ENCODE measurements at regions of chr2 and their contacts with region 1.

Region 1: DNA sequence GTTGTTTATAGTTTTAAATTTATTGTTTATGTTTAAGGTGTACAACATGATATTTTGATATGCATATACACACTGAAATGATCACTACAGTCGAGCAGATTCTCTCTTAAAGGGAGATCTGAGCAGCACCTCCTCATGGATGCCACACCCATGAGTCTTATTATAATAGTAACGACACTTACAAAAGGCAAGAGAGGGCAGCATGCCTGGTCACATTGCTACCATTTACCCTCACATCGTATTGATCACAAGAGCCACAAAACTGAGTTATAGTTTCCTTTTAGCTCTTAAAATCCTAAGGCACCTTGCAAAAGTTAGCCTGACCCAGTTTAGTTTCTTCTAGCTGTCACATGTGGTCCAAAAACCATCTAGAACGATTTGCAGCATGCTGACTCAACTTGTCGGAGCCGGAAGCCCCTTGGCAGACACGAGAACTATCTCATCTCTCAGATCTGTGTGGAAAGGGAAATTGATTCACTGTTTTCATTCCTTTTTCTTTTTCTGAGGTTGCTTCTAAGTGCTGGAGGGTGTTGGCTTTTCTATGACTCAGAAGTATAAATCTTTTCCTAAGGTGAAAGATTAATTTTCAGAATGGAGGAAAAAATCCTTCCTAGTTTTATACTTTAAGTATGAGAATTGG is 85.3 kb downstream of the CDC42EP3 start:
- DNase-seq: peak; percentile 93
- ATAC-seq: peak; percentile 25
- H3K4me3 ChIP-seq: no peak overlapping the region
- H3K27ac ChIP-seq: no peak overlapping the region
- H3K4me1 ChIP-seq: peaks cover 22% of the 10 kb centered on the region
- H3K27me3 ChIP-seq: no peaks in the 10 kb centered on the region
- CTCF ChIP-seq: no peak
- POLR2A ChIP-seq: no peak
- RAD21 ChIP-seq: no peak

Region 2: DNA sequence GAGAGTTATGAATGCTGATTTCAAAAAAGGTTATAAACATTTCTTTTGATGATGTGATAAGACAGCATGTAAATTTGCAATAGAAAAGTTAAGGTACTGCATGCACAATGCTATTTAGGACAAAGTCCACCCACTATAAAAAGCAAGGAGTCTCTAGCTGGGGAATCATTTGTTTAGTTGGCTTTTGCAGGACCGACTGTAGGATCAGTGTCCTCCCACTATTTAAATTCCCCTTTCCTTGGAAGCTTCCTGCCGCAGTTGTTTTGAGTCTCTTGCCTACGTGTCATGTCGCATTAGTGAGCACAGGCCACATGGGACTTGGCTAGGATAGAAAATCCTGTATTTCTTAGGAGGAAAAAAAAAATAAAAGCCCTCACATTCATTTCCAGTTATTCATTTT is 228.6 kb before region 1 on chr2:
- CTCF ChIA-PET with region 1: no interaction called
- POLR2A ChIA-PET with region 1: no interaction called
- dilution Hi-C with region 1: no loop called
- in situ Hi-C with region 1: no loop called
- intact Hi-C with region 1: no loop called
- DNase-seq: no peak
- ATAC-seq: no peak
- H3K4me3 ChIP-seq: no peak overlapping the region
- H3K27ac ChIP-seq: no peak overlapping the region
- H3K4me1 ChIP-seq: no peaks in the 10 kb centered on the region
- H3K27me3 ChIP-seq: peaks cover 26% of the 10 kb centered on the region
- CTCF ChIP-seq: no peak
- POLR2A ChIP-seq: no peak
- RAD21 ChIP-seq: no peak

Region 3: GRCh38 chr2:37623971-37624900 is 38.1 kb after region 1 on chr2:
- CTCF ChIA-PET with region 1: interaction called, 3 read pairs
- POLR2A ChIA-PET with region 1: no interaction called
- dilution Hi-C with region 1: no loop called
- in situ Hi-C with region 1: no loop called
- intact Hi-C with region 1: loop called (anchors 5 kb)
- DNase-seq: peak; percentile 75
- ATAC-seq: peak; percentile 37
- H3K4me3 ChIP-seq: no peak overlapping the region
- H3K27ac ChIP-seq: no peak overlapping the region
- H3K4me1 ChIP-seq: peaks cover 15% of the 10 kb centered on the region
- H3K27me3 ChIP-seq: no peaks in the 10 kb centered on the region
- CTCF ChIP-seq: no peak
- POLR2A ChIP-seq: no peak
- RAD21 ChIP-seq: no peak

Region 4: GRCh38 chr2:37648331-37649011 is 62.4 kb after region 1 on chr2:
- CTCF ChIA-PET with region 1: no interaction called
- POLR2A ChIA-PET with region 1: no interaction called
- dilution Hi-C with region 1: no loop called
- in situ Hi-C with region 1: no loop called
- intact Hi-C with region 1: no loop called
- DNase-seq: no peak
- ATAC-seq: peak; percentile 8
- H3K4me3 ChIP-seq: no peak overlapping the region
- H3K27ac ChIP-seq: peak overlapping the region; percentile 71; the same call in 1 of the 2 replicates
- H3K4me1 ChIP-seq: peaks cover 40% of the 10 kb centered on the region
- H3K27me3 ChIP-seq: no peaks in the 10 kb centered on the region
- CTCF ChIP-seq: no peak
- POLR2A ChIP-seq: no peak
- RAD21 ChIP-seq: no peak

Measured in IMR-90 (cell line).